Kidney (tissue), 22 donors: ENCODE measurements at regions of chr18 and their contacts with region 1.

Region 1: GRCh38 chr18:49510393-49511115 is 23.5 kb upstream of the C18orf32 start:
- DNase-seq: peak in 3 of 5 donors; percentile 42 to 64 (median 51)
- H3K4me3 ChIP-seq: no peak overlapping the region
- H3K27ac ChIP-seq: no peak overlapping the region
- H3K4me1 ChIP-seq: no peaks in the 10 kb centered on the region
- H3K27me3 ChIP-seq: no peaks in the 10 kb centered on the region
- CTCF ChIP-seq: peak; percentile 76

Region 2: GRCh38 chr18:49728542-49728941 is 218.0 kb after region 1 on chr18:
- intact Hi-C with region 1: no loop called
- DNase-seq: peak in 4 of 5 donors; percentile 53 to 60 (median 57)
- H3K4me3 ChIP-seq: no peak overlapping the region
- H3K27ac ChIP-seq: no peak overlapping the region
- H3K4me1 ChIP-seq: peaks cover 0 to 2% (median 0%) of the 10 kb centered on the region in 3 donors
- H3K27me3 ChIP-seq: no peaks in the 10 kb centered on the region
- CTCF ChIP-seq: peak; percentile 64

Region 3: DNA sequence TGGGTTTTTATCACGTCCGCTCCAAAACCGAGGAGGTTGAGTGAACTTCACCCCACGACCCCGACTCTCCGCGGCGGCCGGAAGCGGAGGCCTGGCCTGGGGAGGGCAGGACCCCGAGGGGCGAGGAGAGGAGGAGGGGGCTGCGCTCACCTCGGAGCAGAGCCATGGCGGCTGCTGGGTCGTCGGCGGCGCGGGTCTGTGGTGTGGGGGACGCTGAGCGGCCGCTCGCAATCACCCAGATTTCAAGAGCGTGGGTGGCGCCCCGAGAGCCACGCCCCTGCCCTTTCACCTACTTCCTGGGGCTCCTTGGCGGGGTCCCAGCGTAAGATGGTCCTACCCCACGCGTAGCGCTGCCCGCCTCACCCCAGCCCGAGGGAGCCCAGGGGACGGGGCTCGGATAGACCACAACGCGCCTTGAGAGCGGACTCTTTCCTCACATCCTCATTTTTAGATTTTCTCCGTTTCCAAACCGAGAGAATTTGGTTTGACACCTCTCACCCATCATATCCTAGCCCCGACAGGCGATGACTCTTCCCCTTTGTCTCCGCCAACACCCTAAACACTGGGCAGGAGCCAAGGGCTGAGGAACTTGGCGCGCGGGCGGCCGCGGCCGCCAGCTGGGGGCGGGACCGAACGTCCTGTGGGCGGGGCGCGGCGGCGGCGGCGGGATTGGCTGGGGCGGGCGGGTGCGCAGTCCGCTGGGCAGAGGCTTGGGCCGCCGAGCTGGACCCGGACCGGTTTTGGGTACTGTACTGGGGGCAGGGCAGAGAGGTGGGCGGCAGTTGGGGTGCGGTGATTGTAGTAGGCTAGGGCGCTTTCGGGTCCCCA is 303.0 kb after region 1 on chr18 and contains the start of gene ACAA2:
- intact Hi-C with region 1: no loop called
- DNase-seq: peak; percentile 87 to 95 (median 91)
- H3K4me3 ChIP-seq: peak within 1 kb of the TSS; percentile 68 to 98 (median 79)
- H3K27ac ChIP-seq: peak within 1 kb of the TSS; percentile 98 to 99
- H3K4me1 ChIP-seq: peaks cover 0 to 6% (median 2%) of the 10 kb centered on the region in 3 donors
- H3K27me3 ChIP-seq: no peaks in the 10 kb centered on the region
- CTCF ChIP-seq: no peak
- total RNA-seq, gene ACAA2: 115 TPM

Region 4: DNA sequence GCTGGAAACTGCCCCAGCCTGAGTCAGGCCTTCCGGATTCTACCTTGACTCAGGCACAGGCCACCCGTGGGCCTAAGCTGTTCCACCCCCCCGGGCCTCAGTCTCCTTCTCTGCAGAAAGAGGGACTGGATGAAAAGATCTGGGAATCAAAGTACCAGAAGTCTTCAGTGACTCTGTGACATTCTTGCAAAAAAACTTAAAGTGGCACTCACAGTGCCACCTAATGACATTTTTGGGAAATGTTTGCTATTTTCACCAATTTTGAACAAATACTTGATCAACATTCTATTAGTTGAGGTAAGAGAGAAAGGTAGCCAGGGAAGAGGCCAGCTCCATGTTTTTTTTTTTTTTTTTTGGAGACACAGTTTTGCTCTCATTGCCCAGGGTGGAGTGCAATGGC is 351.1 kb after region 1 on chr18:
- intact Hi-C with region 1: loop called (anchors 10 kb)
- DNase-seq: peak in 1 of 5 donors; percentile 27
- H3K4me3 ChIP-seq: no peak overlapping the region
- H3K27ac ChIP-seq: no peak overlapping the region
- H3K4me1 ChIP-seq: peaks cover 0 to 6% (median 4%) of the 10 kb centered on the region in 3 donors
- H3K27me3 ChIP-seq: no peaks in the 10 kb centered on the region
- CTCF ChIP-seq: peak; percentile 6